ENCODE measurements at regions of chr20 and their contacts with region 1.

Region 1: GRCh38 chr20:53652090-53652858 is 58.6 kb upstream of the ZNF217 start:
- DNase-seq: no peak
- ATAC-seq: peak; percentile 43
- H3K4me3 Mint-ChIP-seq: peak overlapping the region; percentile 61
- H3K27ac Mint-ChIP-seq: peak overlapping the region; percentile 90
- H3K4me1 Mint-ChIP-seq: peaks cover 50% of the 10 kb centered on the region
- H3K27me3 Mint-ChIP-seq: no peaks in the 10 kb centered on the region
- CTCF ChIP-seq: no peak

Region 2: GRCh38 chr20:53162251-53162835 is 489.9 kb before region 1 on chr20:
- CTCF ChIA-PET with region 1: no interaction called
- POLR2A ChIA-PET with region 1: no interaction called
- intact Hi-C with region 1: no loop called
- DNase-seq: no peak
- ATAC-seq: peak; percentile 53
- H3K4me3 Mint-ChIP-seq: peak overlapping the region; percentile 52
- H3K27ac Mint-ChIP-seq: peak overlapping the region; percentile 33
- H3K4me1 Mint-ChIP-seq: peaks cover 27% of the 10 kb centered on the region
- H3K27me3 Mint-ChIP-seq: peaks cover 2% of the 10 kb centered on the region
- CTCF ChIP-seq: no peak

Region 3: GRCh38 chr20:53629436-53629835 is 22.8 kb before region 1 on chr20:
- CTCF ChIA-PET with region 1: no interaction called
- POLR2A ChIA-PET with region 1: no interaction called
- intact Hi-C with region 1: no loop called
- DNase-seq: no peak
- ATAC-seq: no peak
- H3K4me3 Mint-ChIP-seq: no peak overlapping the region
- H3K27ac Mint-ChIP-seq: no peak overlapping the region
- H3K4me1 Mint-ChIP-seq: peaks cover 19% of the 10 kb centered on the region
- H3K27me3 Mint-ChIP-seq: no peaks in the 10 kb centered on the region
- CTCF ChIP-seq: no peak

Region 4: GRCh38 chr20:53708129-53708968 is 56.1 kb after region 1 on chr20:
- CTCF ChIA-PET with region 1: no interaction called
- POLR2A ChIA-PET with region 1: interaction called, 6 read pairs
- intact Hi-C with region 1: loop called (anchors 1 kb)
- DNase-seq: no peak
- ATAC-seq: peak; percentile 60
- H3K4me3 Mint-ChIP-seq: peak overlapping the region; percentile 62
- H3K27ac Mint-ChIP-seq: peak overlapping the region; percentile 96
- H3K4me1 Mint-ChIP-seq: peaks cover 44% of the 10 kb centered on the region
- H3K27me3 Mint-ChIP-seq: no peaks in the 10 kb centered on the region
- CTCF ChIP-seq: no peak

Region 5: DNA sequence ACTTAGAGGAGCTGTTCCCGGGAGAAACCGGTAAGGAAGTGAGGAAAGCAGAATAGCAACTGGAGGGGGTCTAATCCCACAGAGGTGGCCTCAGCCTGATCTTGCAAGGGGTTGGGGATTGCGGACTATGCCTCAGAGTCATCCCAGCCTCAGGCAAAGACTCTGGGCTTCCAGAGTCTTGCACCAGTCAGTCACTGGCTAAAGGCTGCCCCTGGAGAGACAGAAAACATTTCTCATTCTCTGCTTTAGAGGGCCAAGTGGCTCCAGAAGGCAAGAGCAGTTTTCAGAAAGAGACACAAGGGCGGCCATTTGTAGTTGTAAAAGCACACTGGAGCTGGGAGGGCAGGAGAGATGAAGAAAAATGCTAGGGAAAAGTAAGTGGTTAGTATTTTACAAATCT is 1152.3 kb after region 1 on chr20:
- CTCF ChIA-PET with region 1: no interaction called
- POLR2A ChIA-PET with region 1: no interaction called
- intact Hi-C with region 1: no loop called
- DNase-seq: no peak
- ATAC-seq: no peak
- H3K4me3 Mint-ChIP-seq: no peak overlapping the region
- H3K27ac Mint-ChIP-seq: no peak overlapping the region
- H3K4me1 Mint-ChIP-seq: no peaks in the 10 kb centered on the region
- H3K27me3 Mint-ChIP-seq: no peaks in the 10 kb centered on the region
- CTCF ChIP-seq: no peak